HEK293T (cell line): ENCODE measurements at regions of chr5 and their contacts with region 1.

Region 1: DNA sequence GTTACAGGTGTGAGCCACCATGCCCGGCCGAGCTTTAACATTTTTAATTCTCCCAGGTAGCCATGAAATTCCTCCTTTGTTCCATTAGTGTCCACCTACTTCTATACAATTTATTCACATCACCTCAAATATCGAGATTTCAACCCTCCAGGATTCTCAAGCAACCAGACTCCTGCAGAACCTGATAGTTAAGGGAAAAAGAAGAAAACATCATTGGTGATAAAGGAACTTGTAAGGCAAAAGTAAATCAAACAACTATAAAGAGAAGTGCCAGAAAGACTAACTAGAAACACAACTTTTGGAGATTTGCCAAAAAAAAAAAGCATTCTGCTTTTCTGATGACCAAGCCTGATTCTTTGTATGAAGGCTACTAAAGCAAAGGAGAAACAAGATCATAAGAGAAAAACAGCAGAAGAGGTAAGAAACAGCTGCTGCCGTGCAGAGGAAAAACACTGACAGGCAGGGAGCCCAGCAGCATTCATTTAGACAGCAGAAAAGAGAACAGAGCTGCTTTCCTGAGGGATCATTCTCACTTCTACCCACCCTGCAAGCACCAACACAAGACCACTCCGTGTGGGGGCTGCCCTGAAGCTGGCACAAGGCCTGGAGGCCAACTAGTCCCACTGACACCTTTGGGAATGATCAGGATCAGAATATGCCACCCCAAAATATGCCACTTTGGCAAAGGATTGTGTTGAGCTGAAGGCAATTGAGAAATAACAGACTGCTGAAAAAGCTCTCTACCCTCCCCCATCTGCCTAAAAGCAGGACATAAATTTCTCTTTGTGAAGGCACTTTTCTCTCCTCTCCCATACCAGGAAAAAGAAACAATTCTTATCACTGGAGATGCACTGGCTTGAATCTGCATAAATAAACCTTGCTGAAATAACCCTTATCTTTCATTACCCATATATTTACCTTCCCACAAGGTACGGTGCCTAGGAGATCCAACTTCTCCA is 75.1 kb downstream of the ALDH7A1 start:
- DNase-seq: no peak

Region 2: GRCh38 chr5:125798307-125798706 is 721.6 kb before region 1 on chr5:
- CTCF ChIA-PET with region 1: no interaction called
- POLR2A ChIA-PET with region 1: no interaction called
- DNase-seq: no peak

Region 3: DNA sequence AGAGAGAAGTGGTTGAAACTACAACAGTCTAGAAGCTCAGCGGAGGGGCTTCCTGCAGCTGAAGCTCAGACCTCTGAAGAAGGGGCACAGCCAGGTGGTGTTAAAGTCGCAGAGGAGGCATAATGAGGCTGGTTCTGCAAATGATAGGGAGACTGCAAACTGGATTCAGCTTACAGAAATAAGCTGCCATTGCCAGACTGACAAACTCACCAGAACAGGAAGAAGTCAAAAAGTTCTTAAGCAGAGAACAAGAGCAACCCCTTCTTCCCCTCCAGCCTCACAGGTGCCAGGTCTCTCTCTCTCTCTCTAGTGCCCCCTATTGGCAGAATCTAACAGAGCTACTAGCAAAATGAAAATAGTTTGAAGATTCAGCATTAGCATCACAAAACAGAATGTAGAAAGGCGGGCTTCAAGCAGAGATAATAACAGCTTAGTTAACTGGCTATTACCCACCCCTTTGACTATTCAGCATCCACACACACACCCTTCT is 20.0 kb before region 1 on chr5:
- CTCF ChIA-PET with region 1: interaction called, 21 read pairs
- POLR2A ChIA-PET with region 1: no interaction called
- DNase-seq: peak; percentile 39

Region 4: GRCh38 chr5:126600631-126601511 is 81.0 kb after region 1 on chr5 and contains the start of gene PHAX:
- CTCF ChIA-PET with region 1: interaction called, 11 read pairs
- POLR2A ChIA-PET with region 1: no interaction called
- DNase-seq: peak; percentile 89